Psoas muscle (tissue), 8 donors: ENCODE measurements at regions of chr6 and their contacts with region 1.

Region 1: DNA sequence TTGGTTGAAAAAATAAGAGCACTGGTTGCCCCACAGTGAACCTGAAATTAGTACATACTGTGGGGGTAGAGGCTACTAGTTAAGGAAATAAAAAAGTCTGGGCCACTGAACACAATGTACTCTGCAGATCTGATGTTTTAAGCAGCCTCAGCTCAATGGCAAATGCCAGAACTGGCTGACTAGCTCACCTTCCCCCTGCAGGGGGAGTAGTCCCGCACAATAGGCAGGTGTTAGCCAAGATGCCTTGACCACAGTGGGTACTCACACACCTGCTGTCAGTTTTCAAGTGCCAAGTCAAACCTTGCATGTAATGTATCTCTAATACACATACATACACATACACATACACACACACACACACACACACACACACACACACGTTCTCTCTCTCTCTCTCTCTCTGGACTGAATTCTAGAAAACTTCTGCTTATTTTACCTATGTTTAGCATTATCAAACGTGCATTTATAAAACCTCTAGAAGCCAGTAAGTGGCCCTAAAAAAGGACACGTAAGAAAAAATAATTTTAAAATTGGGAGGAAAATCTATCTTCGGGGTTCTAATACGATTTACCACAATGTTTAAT is 36.1 kb downstream of the GMDS start:
- DNase-seq: peak in 1 of 2 donors; percentile 45
- ATAC-seq: peak; percentile 36 to 86 (median 66)
- H3K4me3 ChIP-seq: no peak overlapping the region
- H3K27ac ChIP-seq: no peak overlapping the region
- H3K4me1 ChIP-seq: no peaks in the 10 kb centered on the region
- H3K27me3 ChIP-seq: no peaks in the 10 kb centered on the region
- CTCF ChIP-seq: peak; percentile 43

Region 2: DNA sequence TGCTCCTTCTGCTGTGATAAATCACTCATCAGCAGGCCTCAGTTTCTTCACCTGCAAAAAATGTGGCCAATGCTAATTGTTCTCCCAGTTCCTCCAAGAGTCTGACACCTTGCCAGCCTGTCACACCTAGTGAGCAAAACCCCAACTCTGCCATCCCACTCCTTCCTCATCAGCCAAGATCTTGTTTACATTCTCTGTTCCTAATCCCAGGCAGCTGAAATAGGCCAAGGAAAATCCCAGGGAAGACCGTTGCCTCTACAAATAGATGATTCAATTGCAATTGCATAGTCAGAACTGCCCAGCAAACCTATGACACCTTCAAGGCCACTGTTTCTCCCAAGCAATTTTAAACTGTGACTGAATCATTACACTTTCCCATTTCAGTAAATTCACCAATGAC is 42.6 kb before region 1 on chr6:
- intact Hi-C with region 1: no loop called
- DNase-seq: no peak
- ATAC-seq: no peak
- H3K4me3 ChIP-seq: no peak overlapping the region
- H3K27ac ChIP-seq: no peak overlapping the region
- H3K4me1 ChIP-seq: no peaks in the 10 kb centered on the region
- H3K27me3 ChIP-seq: no peaks in the 10 kb centered on the region
- CTCF ChIP-seq: no peak

Region 3: GRCh38 chr6:2353412-2354137 is 144.3 kb after region 1 on chr6:
- intact Hi-C with region 1: loop called in 1 of 2 experiments (anchors 10 kb)
- DNase-seq: peak in 1 of 2 donors; percentile 51
- ATAC-seq: peak in 3 of 4 donors; percentile 65 to 79 (median 68)
- H3K4me3 ChIP-seq: no peak overlapping the region
- H3K27ac ChIP-seq: no peak overlapping the region
- H3K4me1 ChIP-seq: no peaks in the 10 kb centered on the region
- H3K27me3 ChIP-seq: no peaks in the 10 kb centered on the region
- CTCF ChIP-seq: peak; percentile 78

Region 4: DNA sequence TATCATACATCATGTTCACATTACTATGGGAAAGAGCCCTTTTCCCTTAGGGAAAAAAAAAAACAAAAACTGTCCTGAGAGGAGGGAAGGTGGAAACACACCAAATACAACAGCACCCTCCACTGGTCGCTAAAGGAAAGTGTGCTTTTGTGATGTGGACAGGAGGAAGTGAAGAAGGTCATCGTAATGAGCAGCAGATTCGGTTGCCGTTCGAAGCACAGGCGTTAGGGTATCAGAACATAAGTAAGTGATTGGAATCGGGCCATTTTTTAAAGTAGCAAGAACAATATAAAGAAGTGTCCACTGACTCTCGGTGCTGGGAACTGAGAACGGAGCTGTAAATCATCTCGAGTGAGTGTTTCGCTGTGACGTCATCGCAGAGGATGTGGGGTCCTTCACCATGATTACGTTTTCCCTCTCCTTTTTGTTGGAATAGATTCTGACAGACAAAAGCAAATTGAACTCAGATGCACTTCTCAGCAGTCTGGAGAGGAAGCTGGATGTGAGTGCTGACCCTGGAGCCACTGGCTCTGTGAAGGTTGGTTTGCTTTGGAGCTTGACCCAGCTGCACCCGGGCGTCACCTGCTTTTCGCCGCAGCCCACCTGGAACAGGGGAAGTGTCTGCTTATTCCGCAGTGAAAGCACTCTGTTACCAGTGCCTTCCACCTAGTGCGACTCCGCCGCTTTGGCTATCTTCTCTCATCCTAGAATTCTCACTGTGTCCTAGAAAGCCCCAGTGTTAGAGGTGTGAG is 239.7 kb after region 1 on chr6:
- intact Hi-C with region 1: loop called in 1 of 2 experiments (anchors 10 kb)
- DNase-seq: no peak
- ATAC-seq: peak in 3 of 4 donors; percentile 49 to 78 (median 54)
- H3K4me3 ChIP-seq: no peak overlapping the region
- H3K27ac ChIP-seq: no peak overlapping the region
- H3K4me1 ChIP-seq: peaks cover 6% of the 10 kb centered on the region
- H3K27me3 ChIP-seq: no peaks in the 10 kb centered on the region
- CTCF ChIP-seq: peak; percentile 58

Region 5: GRCh38 chr6:2505624-2506023 is 296.3 kb after region 1 on chr6:
- intact Hi-C with region 1: no loop called
- DNase-seq: no peak
- ATAC-seq: no peak
- H3K4me3 ChIP-seq: no peak overlapping the region
- H3K27ac ChIP-seq: no peak overlapping the region
- H3K4me1 ChIP-seq: no peaks in the 10 kb centered on the region
- H3K27me3 ChIP-seq: peaks cover 0 to 22% (median 0%) of the 10 kb centered on the region in 3 donors
- CTCF ChIP-seq: no peak

Region 6: GRCh38 chr6:2695454-2696095 is 486.3 kb after region 1 on chr6:
- intact Hi-C with region 1: loop called in 1 of 2 experiments (anchors 5 kb)
- DNase-seq: no peak
- ATAC-seq: peak in 3 of 4 donors; percentile 45 to 58 (median 47)
- H3K4me3 ChIP-seq: no peak overlapping the region
- H3K27ac ChIP-seq: no peak overlapping the region
- H3K4me1 ChIP-seq: no peaks in the 10 kb centered on the region
- H3K27me3 ChIP-seq: no peaks in the 10 kb centered on the region
- CTCF ChIP-seq: peak; percentile 54